Activated CD4-positive, alpha-beta T cell treated with anti-CD3 and anti-CD28 coated beads, Interleukin-2, amount 10 ng/mL, durations not matched to agents 7 days and 5 days (primary cell): ENCODE measurements at regions of chr17 and their contacts with region 1.

Region 1: GRCh38 chr17:32877164-32877764 is 340 bp upstream of the MYO1D start:
- DNase-seq: peak; percentile 90
- H3K4me3 Mint-ChIP-seq: peak overlapping the region; percentile 68
- H3K27ac Mint-ChIP-seq: no peak overlapping the region
- H3K4me1 Mint-ChIP-seq: peaks cover 13% of the 10 kb centered on the region
- H3K27me3 Mint-ChIP-seq: peaks cover 29% of the 10 kb centered on the region

Region 2: DNA sequence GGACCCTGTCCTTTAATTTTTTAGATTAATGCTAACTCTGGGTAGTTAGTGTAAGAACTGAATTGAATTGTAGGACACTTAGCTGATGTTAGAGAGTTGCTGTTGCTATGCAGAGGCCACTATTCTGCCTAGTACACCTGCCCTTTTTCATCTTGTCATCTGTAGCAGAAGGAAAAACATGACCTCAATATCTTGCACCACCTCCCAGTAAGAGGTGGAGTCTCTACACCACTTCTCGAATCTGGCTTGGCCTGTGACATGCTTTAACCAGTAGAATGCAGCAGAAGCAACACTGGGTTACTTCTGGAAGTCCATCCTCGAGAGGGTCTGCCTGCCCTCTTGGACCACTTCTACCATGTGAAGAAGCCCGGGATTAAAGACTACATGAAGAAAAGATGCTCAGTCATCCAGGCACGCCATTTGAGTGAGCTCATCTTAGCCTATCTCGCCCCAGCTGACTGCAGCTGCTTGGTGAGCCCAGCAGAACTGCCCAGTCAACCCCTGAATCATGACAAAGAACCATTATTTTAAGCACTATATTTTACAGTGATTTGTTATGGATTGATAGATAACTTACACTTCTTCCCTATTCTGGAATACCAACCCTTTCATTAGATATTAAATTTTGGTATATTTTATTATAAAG is 153.8 kb before region 1 on chr17:
- CTCF ChIA-PET with region 1: no interaction called
- POLR2A ChIA-PET with region 1: no interaction called
- DNase-seq: no peak
- H3K4me3 Mint-ChIP-seq: no peak overlapping the region
- H3K27ac Mint-ChIP-seq: no peak overlapping the region
- H3K4me1 Mint-ChIP-seq: no peaks in the 10 kb centered on the region
- H3K27me3 Mint-ChIP-seq: no peaks in the 10 kb centered on the region

Region 3: GRCh38 chr17:32783602-32784001 is 93.7 kb before region 1 on chr17:
- CTCF ChIA-PET with region 1: interaction called, 21 read pairs
- POLR2A ChIA-PET with region 1: no interaction called
- DNase-seq: peak; percentile 24
- H3K4me3 Mint-ChIP-seq: no peak overlapping the region
- H3K27ac Mint-ChIP-seq: no peak overlapping the region
- H3K4me1 Mint-ChIP-seq: no peaks in the 10 kb centered on the region
- H3K27me3 Mint-ChIP-seq: peaks cover 7% of the 10 kb centered on the region

Region 4: DNA sequence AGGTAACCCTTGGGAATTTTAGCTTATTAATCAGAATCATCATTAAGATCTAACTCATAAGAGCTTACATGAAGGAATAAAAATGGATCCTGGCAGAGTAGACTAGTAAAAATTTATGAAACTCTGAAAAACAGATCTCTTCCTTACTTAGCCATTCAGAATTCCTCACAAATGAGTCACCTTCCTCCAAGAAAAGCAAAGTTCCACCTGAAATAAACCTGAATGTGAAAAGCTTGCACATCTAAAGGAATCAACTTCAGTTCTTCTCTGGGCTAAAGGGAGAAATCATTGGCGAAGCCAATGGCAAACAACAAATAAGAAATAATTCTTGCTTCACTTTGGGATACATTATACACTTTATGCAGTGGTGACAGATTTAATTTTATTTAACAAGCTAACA is 23.1 kb before region 1 on chr17:
- CTCF ChIA-PET with region 1: interaction called, 56 read pairs
- POLR2A ChIA-PET with region 1: no interaction called
- DNase-seq: no peak
- H3K4me3 Mint-ChIP-seq: no peak overlapping the region
- H3K27ac Mint-ChIP-seq: no peak overlapping the region
- H3K4me1 Mint-ChIP-seq: no peaks in the 10 kb centered on the region
- H3K27me3 Mint-ChIP-seq: peaks cover 18% of the 10 kb centered on the region

Region 5: GRCh38 chr17:32894245-32894644 is 17.0 kb after region 1 on chr17:
- CTCF ChIA-PET with region 1: interaction called, 12 read pairs
- POLR2A ChIA-PET with region 1: no interaction called
- DNase-seq: no peak
- H3K4me3 Mint-ChIP-seq: no peak overlapping the region
- H3K27ac Mint-ChIP-seq: no peak overlapping the region
- H3K4me1 Mint-ChIP-seq: no peaks in the 10 kb centered on the region
- H3K27me3 Mint-ChIP-seq: peaks cover 21% of the 10 kb centered on the region

Region 6: GRCh38 chr17:32909787-32910369 is 32.6 kb after region 1 on chr17:
- CTCF ChIA-PET with region 1: interaction called, 27 read pairs
- POLR2A ChIA-PET with region 1: no interaction called
- DNase-seq: peak; percentile 60
- H3K4me3 Mint-ChIP-seq: no peak overlapping the region
- H3K27ac Mint-ChIP-seq: no peak overlapping the region
- H3K4me1 Mint-ChIP-seq: peaks cover 14% of the 10 kb centered on the region
- H3K27me3 Mint-ChIP-seq: peaks cover 26% of the 10 kb centered on the region

Region 7: GRCh38 chr17:32936894-32937500 is 59.7 kb after region 1 on chr17:
- CTCF ChIA-PET with region 1: interaction called, 19 read pairs
- POLR2A ChIA-PET with region 1: no interaction called
- DNase-seq: peak; percentile 65
- H3K4me3 Mint-ChIP-seq: no peak overlapping the region
- H3K27ac Mint-ChIP-seq: no peak overlapping the region
- H3K4me1 Mint-ChIP-seq: peaks cover 2% of the 10 kb centered on the region
- H3K27me3 Mint-ChIP-seq: peaks cover 25% of the 10 kb centered on the region

Region 8: DNA sequence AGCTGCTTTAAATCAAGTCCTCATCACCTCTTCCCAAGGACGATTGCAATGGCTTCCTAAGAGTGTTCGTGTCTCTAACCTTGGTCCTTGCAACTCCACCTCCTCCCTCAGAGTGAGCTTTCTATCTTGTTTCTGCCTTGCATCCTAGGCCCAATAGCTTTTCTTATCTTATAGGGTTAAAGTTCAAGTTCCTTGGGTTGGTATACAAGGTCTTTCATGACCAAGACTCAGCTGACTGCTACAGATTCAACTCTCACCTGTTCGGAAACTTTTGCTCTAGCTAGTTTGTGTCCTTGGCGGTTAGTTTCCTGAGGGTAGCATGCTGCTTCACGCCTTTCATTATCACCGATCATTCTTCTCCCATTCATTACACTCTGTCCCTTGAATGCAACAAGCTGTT is 125.0 kb after region 1 on chr17:
- CTCF ChIA-PET with region 1: no interaction called
- POLR2A ChIA-PET with region 1: no interaction called
- DNase-seq: no peak
- H3K4me3 Mint-ChIP-seq: no peak overlapping the region
- H3K27ac Mint-ChIP-seq: no peak overlapping the region
- H3K4me1 Mint-ChIP-seq: peaks cover 4% of the 10 kb centered on the region
- H3K27me3 Mint-ChIP-seq: peaks cover 22% of the 10 kb centered on the region